ENCODE measurements at regions of chr1 and their contacts with region 1.

Region 1: GRCh38 chr1:2412519-2413233 is at the start of gene PEX10:
- DNase-seq: peak; percentile 100
- ATAC-seq: peak; percentile 89
- H3K4me3 Mint-ChIP-seq: peak within 1 kb of the TSS; percentile 83
- H3K27ac Mint-ChIP-seq: peak within 1 kb of the TSS; percentile 85
- H3K4me1 Mint-ChIP-seq: peaks cover 38% of the 10 kb centered on the region
- H3K27me3 Mint-ChIP-seq: no peaks in the 10 kb centered on the region
- total RNA-seq, gene PEX10: 15.1 to 17.7 TPM

Region 2: DNA sequence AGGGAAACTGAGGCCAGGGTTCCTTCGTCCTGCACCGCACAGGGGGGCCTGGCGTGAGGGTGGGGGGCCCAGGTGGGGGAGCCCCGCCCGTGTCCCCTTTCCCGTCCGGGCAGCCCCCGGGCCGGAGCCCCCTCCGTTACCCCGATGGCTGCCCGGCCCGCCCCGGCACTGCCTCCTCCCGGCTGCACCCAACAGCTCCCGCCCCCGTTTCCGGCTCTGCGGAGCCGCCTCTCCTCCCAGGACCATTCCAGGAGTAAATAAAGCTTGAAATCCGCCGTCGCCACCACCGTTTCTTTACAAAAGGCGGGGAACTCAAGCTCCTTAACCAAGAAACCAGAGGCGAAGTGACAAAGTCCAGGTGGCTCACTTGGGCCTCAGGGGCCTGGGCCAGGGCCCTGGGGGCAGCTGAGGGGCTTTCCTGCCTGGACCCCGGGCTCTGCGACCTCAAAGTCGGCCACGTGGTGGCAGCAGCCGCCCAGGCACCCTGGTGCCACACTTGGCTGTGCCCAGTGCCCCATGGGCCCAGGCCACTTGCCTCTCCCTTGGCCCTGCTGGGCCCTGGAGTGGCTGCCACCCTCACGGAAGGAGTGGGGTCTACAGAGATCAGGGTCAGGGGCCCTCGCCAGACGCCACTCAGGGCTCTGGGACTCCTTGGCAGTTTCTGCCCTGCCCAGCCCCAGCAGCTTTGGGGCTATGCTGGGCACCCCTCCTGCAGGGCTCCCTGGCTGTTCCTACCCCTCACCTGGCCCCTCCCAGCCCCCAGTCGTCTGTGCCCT is 217.6 kb before region 1 on chr1:
- CTCF ChIA-PET with region 1: interaction called, 4 read pairs
- POLR2A ChIA-PET with region 1: no interaction called
- intact Hi-C with region 1: loop called in 1 of 2 experiments (anchors 2 kb)
- DNase-seq: peak; percentile 93
- ATAC-seq: peak; percentile 67
- H3K4me3 Mint-ChIP-seq: peak overlapping the region; percentile 77
- H3K27ac Mint-ChIP-seq: peak overlapping the region; percentile 86
- H3K4me1 Mint-ChIP-seq: peaks cover 32% of the 10 kb centered on the region
- H3K27me3 Mint-ChIP-seq: no peaks in the 10 kb centered on the region

Region 3: GRCh38 chr1:2240270-2241156 is 172.2 kb before region 1 on chr1:
- CTCF ChIA-PET with region 1: no interaction called
- POLR2A ChIA-PET with region 1: no interaction called
- intact Hi-C with region 1: no loop called
- DNase-seq: peak; percentile 63
- ATAC-seq: peak; percentile 41
- H3K4me3 Mint-ChIP-seq: peak overlapping the region; percentile 45
- H3K27ac Mint-ChIP-seq: peak overlapping the region; percentile 87
- H3K4me1 Mint-ChIP-seq: peaks cover 86% of the 10 kb centered on the region
- H3K27me3 Mint-ChIP-seq: no peaks in the 10 kb centered on the region

Region 4: DNA sequence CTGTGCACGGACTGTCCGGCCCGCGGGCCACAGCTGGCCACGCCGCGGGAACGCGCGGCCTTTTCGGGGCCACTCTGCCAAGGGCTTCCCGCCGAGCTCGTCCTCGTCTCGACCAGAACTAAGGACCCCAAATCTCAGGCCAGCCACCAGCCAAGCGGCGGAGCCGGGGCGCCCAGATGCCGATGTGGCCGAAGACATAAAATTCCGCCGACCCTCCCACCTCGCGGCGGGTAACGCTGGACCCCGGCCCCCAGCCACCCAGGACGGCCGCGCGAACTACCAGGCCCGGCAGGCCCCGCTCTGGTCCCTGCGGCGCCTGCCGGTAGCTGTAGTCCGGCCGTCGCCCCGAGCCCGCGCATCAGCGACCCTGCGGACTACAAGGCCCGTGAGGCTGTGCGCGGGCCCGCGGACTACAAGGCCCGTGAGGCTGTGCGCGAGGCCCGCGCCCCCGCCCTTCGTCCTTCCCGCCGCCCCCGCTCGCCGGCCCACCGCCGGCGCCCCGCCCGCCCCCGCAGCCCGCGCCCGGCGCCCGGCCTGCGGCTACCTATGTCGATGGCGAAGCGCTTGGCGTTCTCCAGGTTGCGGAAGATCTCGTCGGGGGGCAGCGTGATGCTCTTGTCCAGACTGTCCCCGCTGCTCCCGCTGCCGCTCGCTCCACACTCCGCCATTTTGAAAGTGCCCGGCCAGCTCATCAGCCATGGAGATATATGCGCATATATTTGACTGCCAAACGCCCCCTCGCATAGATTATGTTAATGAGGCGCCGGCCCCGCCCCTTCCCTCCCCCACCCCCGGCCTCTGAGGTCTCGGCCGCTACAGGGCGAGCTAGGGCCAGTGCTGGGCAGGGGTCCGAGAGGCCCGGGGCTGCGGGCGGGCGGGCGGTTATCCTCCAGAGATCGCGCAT is 113.5 kb after region 1 on chr1 and contains the start of gene PANK4:
- CTCF ChIA-PET with region 1: interaction called, 8 read pairs
- POLR2A ChIA-PET with region 1: no interaction called
- intact Hi-C with region 1: loop called (anchors 1 to 2 kb)
- DNase-seq: peak; percentile 96
- ATAC-seq: peak; percentile 87
- H3K4me3 Mint-ChIP-seq: peak within 1 kb of the TSS; percentile 77
- H3K27ac Mint-ChIP-seq: peak within 1 kb of the TSS; percentile 91
- H3K4me1 Mint-ChIP-seq: peaks cover 43% of the 10 kb centered on the region
- H3K27me3 Mint-ChIP-seq: peaks cover 3% of the 10 kb centered on the region
- total RNA-seq, gene PANK4: 32.4 to 39.2 TPM

Region 5: DNA sequence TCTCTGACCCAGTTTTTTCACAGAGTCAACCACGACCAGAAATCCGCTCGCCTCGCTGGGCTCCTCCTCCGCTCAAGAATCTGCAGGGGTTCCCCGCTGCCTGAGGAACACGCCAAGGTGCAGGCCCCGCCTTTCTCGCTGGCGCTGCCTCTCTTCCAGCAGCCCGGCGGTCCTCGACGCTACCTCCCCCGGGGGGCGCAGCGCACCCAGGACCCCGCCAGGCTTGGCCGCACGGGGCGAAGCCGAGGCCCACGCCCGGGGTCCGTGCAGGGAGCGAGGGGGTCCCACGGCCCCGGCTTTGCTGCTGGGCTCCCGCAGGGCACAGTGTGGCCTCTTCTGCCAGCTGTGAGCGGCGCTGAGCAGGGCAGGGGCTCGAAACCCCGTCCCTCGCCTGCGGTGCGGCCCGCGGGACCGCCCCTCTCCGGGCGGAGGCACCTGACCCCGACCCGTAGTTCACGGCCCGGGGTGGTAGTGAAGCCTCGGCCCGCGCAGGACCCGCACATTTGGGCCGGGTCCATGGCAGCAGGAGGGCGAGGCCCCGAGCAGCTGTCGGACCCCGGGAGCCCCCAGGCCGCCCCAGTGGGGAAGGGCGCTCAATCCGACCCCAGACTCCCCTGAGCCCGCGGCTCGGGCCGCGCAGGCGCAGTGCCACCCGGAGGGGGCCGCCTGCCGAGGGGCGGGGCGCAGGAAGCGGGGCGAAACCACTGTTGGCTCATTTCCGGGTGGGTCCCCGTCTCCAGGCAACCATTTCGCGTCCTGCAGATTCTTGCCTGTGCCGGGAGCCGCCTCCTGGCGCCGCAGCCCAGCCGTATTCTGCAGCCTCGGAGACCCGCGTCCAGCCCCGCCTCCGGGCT is 230.1 kb after region 1 on chr1:
- CTCF ChIA-PET with region 1: no interaction called
- POLR2A ChIA-PET with region 1: no interaction called
- intact Hi-C with region 1: loop called (anchors 1 to 5 kb)
- DNase-seq: peak; percentile 97
- ATAC-seq: peak; percentile 86
- H3K4me3 Mint-ChIP-seq: peak overlapping the region; percentile 80
- H3K27ac Mint-ChIP-seq: peak overlapping the region; percentile 83
- H3K4me1 Mint-ChIP-seq: no peaks in the 10 kb centered on the region
- H3K27me3 Mint-ChIP-seq: no peaks in the 10 kb centered on the region

Region 6: DNA sequence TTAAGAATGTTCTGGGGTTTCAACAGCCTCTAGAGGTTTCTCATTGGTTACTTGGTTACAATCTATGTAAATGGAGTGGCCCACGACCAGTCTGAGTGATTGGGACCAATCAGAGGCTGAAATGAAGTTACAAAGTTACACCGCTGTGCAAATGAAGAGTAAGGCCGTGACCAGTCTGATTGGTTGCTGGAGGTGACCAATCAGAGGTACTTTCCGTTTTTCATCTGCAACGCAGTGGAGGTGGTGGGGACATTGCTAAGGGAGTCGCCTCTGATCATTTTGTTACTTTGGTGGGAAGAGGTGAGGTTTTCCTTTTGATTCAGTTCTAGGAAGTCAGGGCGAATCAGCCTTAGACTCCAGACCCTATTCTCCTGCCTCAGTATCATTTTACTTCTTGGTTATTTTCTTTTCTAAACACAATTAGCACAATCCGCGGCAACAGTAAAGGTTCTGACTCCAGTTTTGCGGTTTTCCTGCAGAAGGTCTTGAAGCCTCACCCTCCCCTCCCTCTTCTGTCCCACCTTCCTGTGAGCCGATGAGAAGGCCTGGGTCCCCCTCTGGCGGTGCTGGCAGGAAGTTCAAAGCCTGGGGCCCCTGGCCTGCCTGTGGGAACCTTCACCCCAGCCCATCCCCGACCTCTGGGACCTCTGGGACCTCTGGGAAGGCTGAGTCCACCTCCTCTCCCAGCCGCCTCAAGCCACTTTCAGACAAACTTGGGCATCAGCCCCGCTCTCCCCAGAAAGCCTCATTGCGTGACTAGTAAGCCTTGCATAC is 427.5 kb after region 1 on chr1:
- CTCF ChIA-PET with region 1: no interaction called
- POLR2A ChIA-PET with region 1: no interaction called
- intact Hi-C with region 1: loop called in 1 of 2 experiments (anchors 1 kb)
- DNase-seq: peak; percentile 81
- ATAC-seq: peak; percentile 96
- H3K4me3 Mint-ChIP-seq: peak overlapping the region; percentile 67
- H3K27ac Mint-ChIP-seq: peak overlapping the region; percentile 84
- H3K4me1 Mint-ChIP-seq: peaks cover 21% of the 10 kb centered on the region
- H3K27me3 Mint-ChIP-seq: no peaks in the 10 kb centered on the region

Region 7: DNA sequence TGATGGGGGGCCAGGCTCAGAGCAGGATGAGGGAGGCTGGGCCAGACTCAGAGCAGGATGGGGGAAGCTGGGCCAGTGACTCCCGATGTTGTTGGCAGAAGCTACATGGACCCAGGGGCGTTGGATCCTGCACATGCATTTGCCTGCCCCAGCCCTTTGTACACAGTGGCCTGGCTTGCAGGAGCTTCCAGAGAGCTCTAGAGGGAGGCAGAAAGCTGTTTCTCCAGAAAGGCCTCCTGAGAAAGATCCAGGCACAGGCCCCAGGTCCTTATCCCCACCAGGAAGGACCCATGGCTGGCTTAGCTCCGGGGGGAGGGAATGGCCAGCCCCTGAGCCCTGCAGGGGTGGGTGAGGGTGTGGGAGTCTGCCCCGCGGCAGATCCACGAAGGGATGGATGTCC is 502.0 kb after region 1 on chr1:
- CTCF ChIA-PET with region 1: no interaction called
- POLR2A ChIA-PET with region 1: no interaction called
- intact Hi-C with region 1: no loop called
- DNase-seq: no peak
- ATAC-seq: no peak
- H3K4me3 Mint-ChIP-seq: no peak overlapping the region
- H3K27ac Mint-ChIP-seq: no peak overlapping the region
- H3K4me1 Mint-ChIP-seq: no peaks in the 10 kb centered on the region
- H3K27me3 Mint-ChIP-seq: no peaks in the 10 kb centered on the region

Measured in activated CD4-positive, alpha-beta T cell treated with anti-CD3 and anti-CD28 coated beads for 36 hours (primary cell).